CD8-positive, alpha-beta memory T cell (primary cell): ENCODE measurements at regions of chr20 and their contacts with region 1.

Region 1: DNA sequence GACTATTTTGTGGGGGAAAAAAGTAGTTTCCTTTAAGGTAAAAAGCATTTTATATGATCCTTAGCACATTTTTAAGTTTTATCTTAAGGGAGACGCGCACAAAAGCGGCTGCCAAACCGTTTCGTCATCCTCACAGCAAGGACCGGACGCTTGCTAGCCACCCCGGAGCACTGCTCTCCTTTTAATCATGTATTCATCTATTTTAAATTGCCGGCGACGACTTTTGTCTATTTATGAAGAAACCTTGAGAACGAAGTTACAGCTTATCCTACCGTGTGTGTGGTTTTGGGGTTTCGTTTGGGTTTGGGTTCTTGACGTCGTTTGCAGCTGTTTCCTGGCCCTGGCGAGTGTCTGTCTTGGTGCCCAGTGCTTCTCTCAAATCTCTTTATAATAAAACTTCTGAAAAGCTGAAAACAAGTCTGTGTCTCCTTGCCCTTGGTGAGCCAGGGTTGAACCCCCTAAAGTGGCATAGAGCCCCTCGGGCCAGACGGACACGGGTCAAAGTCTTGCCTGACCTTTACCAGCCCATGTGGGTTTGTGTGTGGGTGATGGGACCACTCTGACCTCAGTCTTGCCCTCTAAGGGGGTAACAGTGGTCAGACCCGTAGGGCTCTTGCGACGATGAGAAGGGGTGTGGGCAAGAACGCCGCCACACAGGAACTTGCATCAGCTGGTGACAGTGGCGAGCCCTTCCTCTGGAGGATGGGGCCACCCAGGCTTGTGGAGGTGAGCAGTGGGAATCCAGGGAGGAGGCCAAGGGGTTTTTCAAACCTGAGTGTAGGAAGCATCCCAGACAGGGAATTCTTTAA is 117.6 kb downstream of the JPH2 start:
- DNase-seq: peak; percentile 33 to 95 (median 75)
- H3K4me3 ChIP-seq: peak overlapping the region; percentile 74
- H3K4me3 Mint-ChIP-seq: peak overlapping the region; percentile 40 to 87 (median 79)
- H3K27ac ChIP-seq: peak overlapping the region; percentile 44
- H3K27ac Mint-ChIP-seq: peak overlapping the region; percentile 71 to 97 (median 90)
- H3K4me1 ChIP-seq: peaks cover 79% of the 10 kb centered on the region
- H3K4me1 Mint-ChIP-seq: peaks cover 23 to 55% (median 32%) of the 10 kb centered on the region in 3 donors
- H3K27me3 ChIP-seq: no peaks in the 10 kb centered on the region
- H3K27me3 Mint-ChIP-seq: peaks cover 0 to 9% of the 10 kb centered on the region in 2 donors

Region 2: DNA sequence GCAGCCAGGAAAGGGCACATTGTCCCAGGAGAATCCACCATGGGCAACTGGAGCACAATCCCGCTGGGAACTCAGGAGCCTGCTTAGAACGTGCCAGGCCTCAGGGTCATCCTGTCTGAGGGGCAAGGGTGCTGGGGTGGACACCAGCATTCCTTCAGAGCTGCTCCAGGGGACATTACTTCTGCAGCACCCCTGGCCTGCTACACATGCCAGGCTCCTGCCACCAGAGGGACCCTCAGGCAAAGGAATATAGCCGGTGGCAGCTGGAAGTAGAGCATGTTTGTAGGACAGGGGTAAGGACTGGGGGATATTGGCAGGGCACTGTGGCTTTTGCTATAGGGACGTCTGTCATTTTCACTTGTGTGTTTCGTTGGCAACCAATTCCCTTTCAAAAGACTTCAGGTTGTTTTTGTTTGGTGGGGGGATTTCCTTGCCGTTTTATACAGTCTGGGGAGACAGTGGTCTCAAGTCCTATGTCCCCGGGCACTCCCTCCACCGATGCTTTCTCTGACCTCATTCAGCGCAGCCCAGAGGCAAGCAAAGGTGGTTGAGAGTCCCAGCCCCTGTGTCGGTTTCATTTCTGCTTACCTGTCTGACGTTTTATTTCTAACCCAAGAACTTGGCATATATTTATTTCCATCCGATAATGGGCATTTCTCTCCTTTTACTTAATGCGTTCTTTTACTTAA is 13.3 kb before region 1 on chr20:
- CTCF ChIA-PET with region 1: interaction called, 24 read pairs
- POLR2A ChIA-PET with region 1: interaction called, 3 read pairs
- DNase-seq: peak in 3 of 5 donors; percentile 22 to 77 (median 77)
- H3K4me3 ChIP-seq: no peak overlapping the region
- H3K4me3 Mint-ChIP-seq: no peak overlapping the region
- H3K27ac ChIP-seq: no peak overlapping the region
- H3K27ac Mint-ChIP-seq: no peak overlapping the region
- H3K4me1 ChIP-seq: no peaks in the 10 kb centered on the region
- H3K4me1 Mint-ChIP-seq: no peaks in the 10 kb centered on the region
- H3K27me3 ChIP-seq: no peaks in the 10 kb centered on the region
- H3K27me3 Mint-ChIP-seq: peaks cover 0 to 6% of the 10 kb centered on the region in 2 donors